ENCODE measurements at regions of chr1 and their contacts with region 1.

Region 1: GRCh38 chr1:3618881-3619671 is 5.7 kb upstream of the TPRG1L start:
- DNase-seq: peak; percentile 53
- ATAC-seq: peak; percentile 81
- H3K4me3 ChIP-seq: no peak overlapping the region
- H3K27ac ChIP-seq: no peak overlapping the region
- H3K4me1 ChIP-seq: peaks cover 19 to 39% of the 10 kb centered on the region in 2 experiments
- H3K27me3 ChIP-seq: no peaks in the 10 kb centered on the region
- CTCF ChIP-seq: peak in 2 of 3 experiments; percentile 81 to 86; a peak in 4 of 6 replicates
- POLR2A ChIP-seq: no peak
- RAD21 ChIP-seq: no peak

Region 2: GRCh38 chr1:3292868-3293562 is 326.1 kb before region 1 on chr1:
- CTCF ChIA-PET with region 1: no interaction called
- POLR2A ChIA-PET with region 1: no interaction called
- RAD21 ChIA-PET with region 1: no interaction called
- intact Hi-C with region 1: no loop called
- DNase-seq: peak; percentile 27
- ATAC-seq: peak; percentile 78
- H3K4me3 ChIP-seq: peak overlapping the region in 1 of 2 experiments; percentile 25; a peak in 1 of 4 replicates
- H3K27ac ChIP-seq: no peak overlapping the region
- H3K4me1 ChIP-seq: peaks cover 12 to 23% of the 10 kb centered on the region in 2 experiments
- H3K27me3 ChIP-seq: no peaks in the 10 kb centered on the region; the same call in 1 of the 2 replicates
- CTCF ChIP-seq: no peak
- POLR2A ChIP-seq: no peak
- RAD21 ChIP-seq: no peak

Region 3: DNA sequence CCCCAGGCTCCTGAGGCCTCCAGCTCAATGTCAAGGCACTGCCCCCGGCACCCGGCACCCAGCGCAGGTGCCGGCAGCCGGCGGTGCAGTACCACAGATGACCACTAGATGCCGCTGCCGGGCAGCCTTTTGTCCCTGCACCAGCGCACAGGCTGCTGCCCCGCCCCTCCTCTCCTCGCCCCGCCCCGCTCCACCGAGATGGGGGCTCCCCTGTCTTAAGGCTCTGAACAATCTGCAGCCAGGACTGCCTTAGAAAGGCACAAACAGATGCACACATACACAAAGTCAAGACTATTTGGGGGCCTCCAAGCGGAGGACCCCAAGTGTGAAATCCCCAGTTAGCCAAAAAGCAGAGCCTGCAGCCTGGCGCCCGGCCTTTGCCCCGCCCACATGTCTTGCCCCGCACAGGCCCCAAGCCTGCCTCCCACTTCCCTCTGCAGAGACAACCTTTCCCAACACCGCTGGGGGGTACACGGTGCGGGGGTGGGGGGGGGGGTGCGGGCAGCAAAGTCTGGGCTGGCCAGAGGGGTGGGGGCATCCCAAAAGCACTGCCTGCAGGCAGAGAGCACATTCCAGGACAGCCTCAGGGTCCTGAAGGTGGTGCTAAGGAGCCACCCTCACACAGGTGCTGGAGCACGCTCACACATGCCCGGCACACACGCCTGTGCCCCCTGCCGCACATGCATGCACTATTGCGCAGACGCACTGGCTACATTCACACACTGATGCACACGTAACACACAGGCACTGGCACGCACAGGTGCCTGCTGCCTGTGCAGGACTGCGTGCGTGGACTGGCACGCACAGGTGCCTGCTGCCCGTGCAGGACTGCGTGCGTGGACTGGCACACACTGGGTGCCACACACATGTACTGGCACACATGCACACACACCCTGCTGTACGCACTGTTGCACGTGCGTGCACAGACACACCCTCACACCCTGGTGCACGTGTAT is 127.5 kb before region 1 on chr1:
- CTCF ChIA-PET with region 1: interaction called, 30 read pairs
- POLR2A ChIA-PET with region 1: no interaction called
- RAD21 ChIA-PET with region 1: interaction called, 5 to 6 read pairs
- intact Hi-C with region 1: loop called (anchors 1 kb)
- DNase-seq: peak; percentile 19
- ATAC-seq: peak; percentile 86
- H3K4me3 ChIP-seq: no peak overlapping the region
- H3K27ac ChIP-seq: peak overlapping the region; percentile 22; the same call in 1 of the 2 replicates
- H3K4me1 ChIP-seq: peaks cover 0 to 26% of the 10 kb centered on the region in 2 experiments; a peak in 1 of 4 replicates
- H3K27me3 ChIP-seq: no peaks in the 10 kb centered on the region
- CTCF ChIP-seq: peak; percentile 86 to 97 (median 93)
- POLR2A ChIP-seq: no peak
- RAD21 ChIP-seq: peak; percentile 94

Region 4: GRCh38 chr1:3564921-3565827 is 53.9 kb before region 1 on chr1:
- CTCF ChIA-PET with region 1: interaction called, 21 read pairs
- POLR2A ChIA-PET with region 1: no interaction called
- RAD21 ChIA-PET with region 1: interaction called, 5 to 6 read pairs
- intact Hi-C with region 1: loop called (anchors 1 kb)
- DNase-seq: no peak
- ATAC-seq: peak; percentile 72
- H3K4me3 ChIP-seq: no peak overlapping the region
- H3K27ac ChIP-seq: no peak overlapping the region
- H3K4me1 ChIP-seq: peaks cover 0 to 9% of the 10 kb centered on the region in 2 experiments; a peak in 1 of 4 replicates
- H3K27me3 ChIP-seq: no peaks in the 10 kb centered on the region
- CTCF ChIP-seq: peak; percentile 86 to 92 (median 91); a peak in 5 of 6 replicates
- POLR2A ChIP-seq: no peak
- RAD21 ChIP-seq: peak; percentile 87

Region 5: DNA sequence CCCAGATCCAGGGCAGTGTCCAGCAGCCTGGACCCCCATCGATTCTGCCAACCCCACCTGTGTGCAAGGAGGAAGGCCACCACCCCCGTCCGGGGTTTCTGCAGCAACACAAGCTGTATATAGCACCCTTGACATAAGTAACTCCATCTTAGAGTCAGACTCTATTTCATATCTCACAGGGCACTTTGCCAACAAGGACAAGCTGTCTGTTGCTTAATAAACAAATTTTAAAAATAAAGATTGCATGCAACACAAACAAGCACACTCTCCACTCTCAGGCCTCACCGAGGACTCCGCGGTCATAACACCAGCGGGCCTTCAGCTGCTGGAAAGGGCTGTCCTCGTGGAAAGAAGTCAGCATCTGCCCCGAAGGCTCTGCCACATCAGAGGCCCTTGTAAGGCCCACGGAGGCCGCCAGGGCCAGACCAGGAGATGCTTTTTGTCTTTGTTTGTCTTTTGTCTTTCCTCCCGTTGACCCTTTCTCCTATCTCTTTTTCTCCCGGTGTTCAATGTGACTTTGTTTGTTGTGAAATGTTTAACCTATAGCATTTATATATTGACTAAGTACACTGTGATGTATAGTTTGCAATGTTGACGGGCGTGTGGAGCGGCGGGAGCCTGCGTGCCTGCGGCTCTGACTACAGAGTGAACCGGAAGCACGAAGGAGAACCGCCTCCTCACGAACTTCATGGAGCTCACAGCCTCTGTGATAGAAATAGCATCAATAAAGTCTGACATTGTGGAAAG is 32.0 kb before region 1 on chr1:
- CTCF ChIA-PET with region 1: interaction called, 11 read pairs
- POLR2A ChIA-PET with region 1: no interaction called
- RAD21 ChIA-PET with region 1: interaction called, 3 read pairs
- intact Hi-C with region 1: no loop called
- DNase-seq: no peak
- ATAC-seq: no peak
- H3K4me3 ChIP-seq: no peak overlapping the region
- H3K27ac ChIP-seq: no peak overlapping the region
- H3K4me1 ChIP-seq: no peaks in the 10 kb centered on the region
- H3K27me3 ChIP-seq: no peaks in the 10 kb centered on the region
- CTCF ChIP-seq: no peak
- POLR2A ChIP-seq: no peak
- RAD21 ChIP-seq: no peak

Region 6: GRCh38 chr1:3727042-3727824 is 108.2 kb after region 1 on chr1:
- CTCF ChIA-PET with region 1: interaction called, 4 read pairs
- POLR2A ChIA-PET with region 1: no interaction called
- RAD21 ChIA-PET with region 1: no interaction called
- intact Hi-C with region 1: loop called (anchors 1 kb)
- DNase-seq: no peak
- ATAC-seq: no peak
- H3K4me3 ChIP-seq: no peak overlapping the region
- H3K27ac ChIP-seq: no peak overlapping the region
- H3K4me1 ChIP-seq: no peaks in the 10 kb centered on the region
- H3K27me3 ChIP-seq: no peaks in the 10 kb centered on the region
- CTCF ChIP-seq: no peak
- POLR2A ChIP-seq: no peak
- RAD21 ChIP-seq: no peak

Measured in HCT116 (cell line).